ENCODE measurements at regions of chr6 and their contacts with region 1.

Region 1: GRCh38 chr6:99629293-99629692 is 22.7 kb downstream of the PRDM13 start:
- DNase-seq: no peak

Region 2: GRCh38 chr6:99645986-99646385 is 16.7 kb after region 1 on chr6:
- CTCF ChIA-PET with region 1: no interaction called
- POLR2A ChIA-PET with region 1: no interaction called
- DNase-seq: no peak

Region 3: GRCh38 chr6:99746261-99746895 is 117.1 kb after region 1 on chr6:
- CTCF ChIA-PET with region 1: interaction called, 11 read pairs
- POLR2A ChIA-PET with region 1: no interaction called
- DNase-seq: peak; percentile 65

Region 4: GRCh38 chr6:100035873-100036653 is 406.8 kb after region 1 on chr6:
- CTCF ChIA-PET with region 1: no interaction called
- POLR2A ChIA-PET with region 1: no interaction called
- DNase-seq: no peak

Measured in HEK293T (cell line).